Ascending aorta (tissue), 2 donors: ENCODE measurements at regions of chr5 and their contacts with region 1.

Region 1: GRCh38 chr5:136062366-136063274 is 33.8 kb downstream of the TGFBI start:
- DNase-seq: peak in 1 of 2 donors; percentile 62
- H3K4me3 ChIP-seq: no peak overlapping the region
- H3K27ac ChIP-seq: no peak overlapping the region
- H3K4me1 ChIP-seq: peaks cover 6 to 12% of the 10 kb centered on the region in 2 donors
- H3K27me3 ChIP-seq: no peaks in the 10 kb centered on the region
- CTCF ChIP-seq: peak in 2 of 3 experiments; percentile 36 to 53

Region 2: DNA sequence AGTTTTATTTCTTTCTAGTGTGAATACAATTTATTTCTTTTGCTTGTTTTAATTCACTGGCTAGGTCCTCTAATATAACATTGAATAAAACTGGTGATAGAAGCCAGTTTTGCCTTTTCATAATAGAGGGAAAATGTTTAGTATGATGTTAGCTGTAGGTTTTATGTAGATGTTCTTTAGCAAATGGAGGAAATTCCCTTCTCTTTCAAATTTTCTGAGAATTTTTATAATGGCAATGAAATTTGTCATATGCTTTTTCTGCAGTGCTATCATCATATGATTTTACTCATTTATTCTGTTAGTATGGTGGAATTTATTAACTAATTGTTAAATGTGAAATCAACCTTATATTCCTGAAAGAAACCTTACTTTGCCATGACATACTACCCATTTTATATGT is 645.5 kb before region 1 on chr5:
- intact Hi-C with region 1: no loop called
- DNase-seq: no peak
- H3K4me3 ChIP-seq: no peak overlapping the region
- H3K27ac ChIP-seq: no peak overlapping the region
- H3K4me1 ChIP-seq: no peaks in the 10 kb centered on the region
- H3K27me3 ChIP-seq: no peaks in the 10 kb centered on the region
- CTCF ChIP-seq: no peak

Region 3: DNA sequence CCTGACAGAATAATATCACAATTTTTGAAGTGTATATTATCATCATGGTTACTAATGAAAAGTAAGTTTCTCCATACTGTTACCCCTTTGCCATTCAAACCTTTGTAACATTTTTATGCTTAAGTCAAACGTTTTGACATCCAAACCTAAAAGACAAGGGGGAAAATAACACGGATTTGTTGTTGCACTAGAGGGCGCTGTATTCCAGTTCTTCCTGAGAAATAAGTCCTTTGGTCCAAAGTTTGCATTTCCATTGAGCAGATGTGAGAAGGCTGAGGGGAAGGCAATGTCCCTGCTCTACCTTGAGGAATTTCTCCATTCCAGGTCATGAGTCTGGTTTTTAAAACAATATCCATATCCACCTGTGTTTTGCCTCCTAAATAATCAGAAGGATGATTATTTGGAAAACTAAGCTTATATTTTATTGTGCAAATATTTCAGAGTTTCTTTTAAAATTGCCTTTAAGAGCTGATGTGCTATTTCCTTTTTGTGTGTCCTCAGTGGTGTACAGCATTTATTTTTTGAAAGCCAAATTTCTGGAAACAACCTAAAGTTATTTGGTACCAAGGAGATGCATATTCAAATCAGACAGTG is 117.6 kb before region 1 on chr5:
- intact Hi-C with region 1: loop called (anchors 1 kb)
- DNase-seq: peak in 1 of 2 donors; percentile 72
- H3K4me3 ChIP-seq: no peak overlapping the region
- H3K27ac ChIP-seq: no peak overlapping the region
- H3K4me1 ChIP-seq: no peaks in the 10 kb centered on the region
- H3K27me3 ChIP-seq: no peaks in the 10 kb centered on the region
- CTCF ChIP-seq: peak; percentile 67 to 83 (median 73)

Region 4: DNA sequence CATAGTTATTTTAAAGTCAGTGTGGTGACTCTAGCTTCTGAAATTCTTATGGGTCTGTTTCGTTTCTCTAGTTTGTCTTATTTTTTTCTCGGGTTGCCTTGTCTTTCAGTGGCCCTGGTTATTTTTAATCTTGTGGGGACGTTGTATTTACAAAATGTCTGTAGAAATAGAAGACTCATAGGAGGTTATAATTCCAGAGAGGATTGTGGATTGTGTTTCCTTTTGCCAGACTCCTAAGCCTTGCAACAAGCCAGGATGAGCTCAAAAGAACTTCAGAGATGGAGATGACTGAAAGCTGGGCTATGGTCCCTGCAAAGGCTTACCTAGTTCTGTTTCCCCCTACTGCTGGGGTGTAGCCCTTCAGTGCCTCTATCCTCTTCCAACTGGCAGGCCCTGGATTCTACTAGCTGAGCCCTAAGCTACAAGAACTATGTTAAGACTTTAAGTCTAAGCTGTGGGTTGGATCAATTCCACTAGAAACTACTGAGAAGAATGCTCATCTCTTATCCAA is 75.7 kb before region 1 on chr5:
- intact Hi-C with region 1: loop called (anchors 2 kb)
- DNase-seq: no peak
- H3K4me3 ChIP-seq: no peak overlapping the region
- H3K27ac ChIP-seq: peak overlapping the region; percentile 56 to 80
- H3K4me1 ChIP-seq: peaks cover 0 to 16% of the 10 kb centered on the region in 2 donors
- H3K27me3 ChIP-seq: no peaks in the 10 kb centered on the region
- CTCF ChIP-seq: no peak

Region 5: DNA sequence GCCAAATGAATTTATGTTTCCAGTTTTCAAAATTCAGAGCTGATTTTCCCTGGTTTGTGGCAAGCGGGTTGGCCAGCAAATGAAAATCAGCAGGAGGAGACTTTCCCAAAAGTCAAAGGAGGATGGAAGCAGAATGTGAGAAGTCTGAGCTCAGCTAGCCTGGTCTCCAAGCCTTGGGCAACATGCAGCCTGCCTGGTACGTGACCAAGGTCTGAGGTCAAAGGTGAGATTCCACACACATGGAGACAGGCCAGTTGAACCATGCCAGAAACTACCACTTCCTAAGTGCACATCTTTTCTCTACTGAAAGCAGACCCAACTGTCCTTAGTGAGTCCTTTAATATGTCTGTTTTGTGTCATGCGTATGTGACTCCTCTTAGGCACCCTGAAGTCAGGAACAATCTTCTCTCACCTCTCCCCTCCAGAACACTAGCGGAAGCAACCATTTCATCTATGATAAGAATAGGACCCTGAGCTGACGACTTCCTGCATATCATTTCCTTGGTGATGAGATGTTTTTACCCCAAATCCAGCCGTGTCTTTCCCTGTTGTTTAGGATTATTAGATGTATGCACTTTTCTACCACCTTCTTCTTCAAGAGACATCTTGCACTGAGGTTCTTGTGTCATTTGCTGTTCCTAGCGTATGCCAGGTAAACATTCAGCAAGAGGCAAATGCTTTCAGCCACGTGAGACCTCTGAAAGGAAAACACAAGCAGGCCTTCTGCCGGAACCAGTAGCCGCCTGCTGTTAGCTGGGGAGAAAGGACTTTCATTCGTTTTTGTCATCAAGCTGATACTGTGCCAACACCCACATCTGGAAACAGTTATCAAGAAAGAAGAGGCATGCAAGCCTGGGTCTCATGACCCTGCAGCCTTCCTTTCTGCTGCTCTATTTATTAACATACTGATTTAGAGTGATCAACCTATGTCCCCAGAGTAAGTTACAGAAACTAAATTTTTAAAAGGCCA is 43.5 kb before region 1 on chr5:
- intact Hi-C with region 1: loop called (anchors 5 kb)
- DNase-seq: peak in 1 of 2 donors; percentile 79
- H3K4me3 ChIP-seq: no peak overlapping the region
- H3K27ac ChIP-seq: peak overlapping the region in 1 of 2 donors; percentile 24
- H3K4me1 ChIP-seq: peaks cover 9 to 34% of the 10 kb centered on the region in 2 donors
- H3K27me3 ChIP-seq: no peaks in the 10 kb centered on the region
- CTCF ChIP-seq: peak in 1 of 3 experiments; percentile 13

Region 6: DNA sequence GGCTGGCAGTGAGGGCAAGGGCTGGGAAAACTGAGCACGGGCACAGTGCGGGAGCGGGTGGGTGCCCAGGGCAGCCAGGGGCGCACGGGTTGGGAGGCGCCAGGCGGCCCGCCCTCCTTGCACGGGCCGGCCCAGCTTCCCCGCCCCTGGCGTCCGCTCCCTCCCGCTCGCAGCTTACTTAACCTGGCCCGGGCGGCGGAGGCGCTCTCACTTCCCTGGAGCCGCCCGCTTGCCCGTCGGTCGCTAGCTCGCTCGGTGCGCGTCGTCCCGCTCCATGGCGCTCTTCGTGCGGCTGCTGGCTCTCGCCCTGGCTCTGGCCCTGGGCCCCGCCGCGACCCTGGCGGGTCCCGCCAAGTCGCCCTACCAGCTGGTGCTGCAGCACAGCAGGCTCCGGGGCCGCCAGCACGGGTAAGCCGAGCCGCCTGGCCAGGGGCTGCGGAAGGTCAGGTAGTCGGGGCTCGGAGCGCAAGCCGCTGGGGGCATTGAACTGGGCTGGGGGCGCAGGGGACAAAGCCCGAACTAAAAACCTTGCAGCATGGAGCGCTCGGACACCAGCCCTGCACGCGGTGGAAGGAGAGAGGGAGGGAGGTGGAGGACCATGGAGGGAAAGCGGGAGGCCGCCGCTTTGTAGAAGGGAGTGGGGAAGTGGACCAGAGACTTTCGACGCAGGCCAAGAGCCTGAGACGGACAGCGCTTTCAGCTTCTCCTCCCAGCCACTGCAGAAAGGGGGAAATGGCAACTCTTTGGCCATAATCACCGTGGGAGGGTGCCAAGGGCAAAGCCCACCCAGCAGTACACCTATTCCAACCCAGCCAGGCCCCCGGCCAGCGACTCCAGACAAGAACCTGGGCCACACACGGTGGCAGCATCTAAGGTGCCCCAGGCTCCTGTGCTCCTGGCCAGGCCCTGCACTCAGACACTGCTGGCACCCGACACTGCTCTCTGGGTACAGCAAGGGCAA is 33.6 kb before region 1 on chr5 and contains the start of gene TGFBI:
- intact Hi-C with region 1: loop called (anchors 1 kb)
- DNase-seq: peak in 1 of 2 donors; percentile 79
- H3K4me3 ChIP-seq: peak within 1 kb of the TSS; percentile 60 to 83
- H3K27ac ChIP-seq: peak within 1 kb of the TSS; percentile 60 to 70
- H3K4me1 ChIP-seq: peaks cover 15 to 41% of the 10 kb centered on the region in 2 donors
- H3K27me3 ChIP-seq: no peaks in the 10 kb centered on the region
- CTCF ChIP-seq: peak in 2 of 3 experiments; percentile 21 to 37
- total RNA-seq, gene TGFBI: 174 TPM

Region 7: GRCh38 chr5:136080483-136081216 is 18.0 kb after region 1 on chr5:
- intact Hi-C with region 1: loop called (anchors 1 kb)
- DNase-seq: peak; percentile 72 to 93
- H3K4me3 ChIP-seq: peak overlapping the region; percentile 40 to 55
- H3K27ac ChIP-seq: peak overlapping the region; percentile 70 to 76
- H3K4me1 ChIP-seq: no peaks in the 10 kb centered on the region
- H3K27me3 ChIP-seq: no peaks in the 10 kb centered on the region
- CTCF ChIP-seq: no peak

Region 8: DNA sequence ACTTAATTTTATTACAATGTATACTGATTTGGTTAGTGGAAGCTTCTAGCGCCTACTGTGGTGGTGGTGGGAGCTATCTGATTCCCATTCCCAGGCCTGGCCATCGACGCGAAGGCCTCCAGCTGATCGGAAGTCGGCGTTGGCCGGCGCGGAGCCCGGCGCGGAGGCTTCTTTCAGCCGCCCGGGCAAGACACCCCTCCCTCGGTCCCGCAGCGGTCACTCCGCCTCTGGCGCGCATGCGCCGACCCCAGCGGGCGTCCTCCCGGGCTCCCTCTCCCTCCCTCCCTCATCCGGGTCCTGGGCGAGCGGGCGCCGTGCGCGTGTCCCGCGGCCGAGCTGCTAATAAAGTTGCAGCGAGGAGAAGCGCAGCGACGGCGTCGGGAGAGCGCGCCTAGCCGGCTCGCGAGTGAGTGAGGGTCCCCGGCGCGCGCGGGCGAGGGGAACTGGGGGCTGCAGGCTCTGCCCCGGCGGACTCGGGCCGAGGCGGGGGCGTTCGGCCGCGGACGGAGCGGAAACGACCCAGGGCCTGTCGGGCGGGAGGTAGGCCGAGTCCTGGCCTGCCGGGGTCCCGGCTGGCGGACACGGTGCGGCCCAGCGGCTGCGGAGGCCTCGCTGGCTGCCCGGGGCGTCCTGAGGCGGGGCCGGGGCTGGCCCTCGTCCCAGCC is 70.1 kb after region 1 on chr5 and contains the start of gene SMAD5:
- intact Hi-C with region 1: loop called (anchors 2 kb)
- DNase-seq: peak; percentile 82 to 97
- H3K4me3 ChIP-seq: peak within 1 kb of the TSS; percentile 76 to 84
- H3K27ac ChIP-seq: peak within 1 kb of the TSS; percentile 96 to 97
- H3K4me1 ChIP-seq: peaks cover 6 to 31% of the 10 kb centered on the region in 2 donors
- H3K27me3 ChIP-seq: no peaks in the 10 kb centered on the region
- CTCF ChIP-seq: no peak
- total RNA-seq, gene SMAD5: 23.8 TPM